Endothelial cell of umbilical vein (primary cell): ENCODE measurements at regions of chr5 and their contacts with region 1.

Region 1: DNA sequence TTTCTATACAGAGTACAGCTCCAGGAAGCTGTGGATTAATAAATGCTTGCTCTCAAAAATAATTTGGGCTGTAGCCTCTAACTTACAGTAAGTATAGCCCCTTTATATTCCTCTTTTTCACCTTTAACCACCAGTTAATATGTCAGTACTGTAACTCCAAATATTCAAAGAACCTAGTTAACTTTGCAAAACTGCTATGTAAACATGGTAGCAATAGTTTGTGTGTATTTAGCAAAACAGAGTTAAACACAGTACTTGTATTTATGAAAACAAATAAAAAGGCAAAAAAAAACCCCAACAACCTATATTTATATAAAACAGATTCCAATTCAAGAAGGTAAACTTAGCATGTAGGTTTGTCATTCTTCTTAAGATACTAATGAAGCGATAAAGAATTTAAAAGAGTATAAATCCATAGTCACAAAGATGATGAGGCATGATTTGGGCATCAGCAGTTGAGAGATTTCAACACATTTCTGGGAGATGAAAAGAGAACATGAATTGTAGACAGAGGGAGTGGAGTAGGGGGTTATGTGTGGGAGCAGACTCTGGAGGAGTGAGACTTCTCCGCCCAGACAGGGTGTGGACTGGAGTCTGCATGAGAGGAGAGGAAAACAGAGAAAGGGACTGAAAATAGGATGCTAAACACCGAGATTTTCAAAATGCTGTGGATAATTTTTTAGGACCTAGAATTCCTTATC is 47.0 kb upstream of the F2RL1 start:
- DNase-seq: no peak
- H3K4me3 ChIP-seq: no peak overlapping the region
- H3K27ac ChIP-seq: no peak overlapping the region
- H3K4me1 ChIP-seq: peaks cover 6% of the 10 kb centered on the region
- H3K27me3 ChIP-seq: no peaks in the 10 kb centered on the region
- CTCF ChIP-seq: no peak
- POLR2A ChIP-seq: no peak

Region 2: GRCh38 chr5:75828029-75828428 is 943.8 kb before region 1 on chr5:
- CTCF ChIA-PET with region 1: no interaction called
- POLR2A ChIA-PET with region 1: no interaction called
- dilution Hi-C with region 1: no loop called
- intact Hi-C with region 1: no loop called
- DNase-seq: no peak
- H3K4me3 ChIP-seq: no peak overlapping the region
- H3K27ac ChIP-seq: no peak overlapping the region
- H3K4me1 ChIP-seq: no peaks in the 10 kb centered on the region
- H3K27me3 ChIP-seq: no peaks in the 10 kb centered on the region
- CTCF ChIP-seq: no peak
- POLR2A ChIP-seq: no peak

Region 3: GRCh38 chr5:76402886-76403765 is 368.7 kb before region 1 on chr5 and contains the start of gene IQGAP2:
- CTCF ChIA-PET with region 1: interaction called, 7 read pairs
- POLR2A ChIA-PET with region 1: no interaction called
- dilution Hi-C with region 1: no loop called
- intact Hi-C with region 1: loop called (anchors 1 kb)
- DNase-seq: peak; percentile 51
- H3K4me3 ChIP-seq: peak within 1 kb of the TSS; percentile 42 to 70 (median 50)
- H3K27ac ChIP-seq: no peak within 1 kb of the TSS
- H3K4me1 ChIP-seq: peaks cover 7% of the 10 kb centered on the region
- H3K27me3 ChIP-seq: peaks cover 34 to 54% of the 10 kb centered on the region in 2 experiments
- CTCF ChIP-seq: peak; percentile 66 to 82
- POLR2A ChIP-seq: no peak
- total RNA-seq, gene IQGAP2: 4.7 and 5.7 TPM in 2 replicates

Region 4: DNA sequence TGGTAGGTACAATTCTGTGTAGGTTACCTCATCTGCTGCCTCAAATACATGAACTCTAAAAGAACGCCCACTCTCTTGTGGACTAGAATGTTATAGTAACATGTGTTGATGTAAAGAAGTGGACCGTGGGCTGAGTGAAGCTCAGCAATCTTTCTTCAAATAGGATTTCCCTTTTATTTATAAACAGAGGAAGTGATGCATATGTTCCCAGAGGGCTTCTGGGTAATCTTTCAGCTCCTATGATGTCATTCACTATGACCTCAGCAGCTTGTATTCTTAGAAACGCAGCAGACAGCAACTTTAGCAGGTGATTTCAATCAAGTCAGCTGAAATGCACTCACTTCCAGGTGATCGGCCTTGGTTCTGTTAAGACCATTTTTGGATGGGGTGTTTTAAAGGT is 163.0 kb before region 1 on chr5:
- CTCF ChIA-PET with region 1: interaction called, 391 read pairs
- POLR2A ChIA-PET with region 1: interaction called, 11 read pairs
- dilution Hi-C with region 1: no loop called
- intact Hi-C with region 1: no loop called
- DNase-seq: peak; percentile 64
- H3K4me3 ChIP-seq: no peak overlapping the region
- H3K27ac ChIP-seq: no peak overlapping the region
- H3K4me1 ChIP-seq: no peaks in the 10 kb centered on the region
- H3K27me3 ChIP-seq: no peaks in the 10 kb centered on the region
- CTCF ChIP-seq: no peak
- POLR2A ChIP-seq: no peak

Region 5: DNA sequence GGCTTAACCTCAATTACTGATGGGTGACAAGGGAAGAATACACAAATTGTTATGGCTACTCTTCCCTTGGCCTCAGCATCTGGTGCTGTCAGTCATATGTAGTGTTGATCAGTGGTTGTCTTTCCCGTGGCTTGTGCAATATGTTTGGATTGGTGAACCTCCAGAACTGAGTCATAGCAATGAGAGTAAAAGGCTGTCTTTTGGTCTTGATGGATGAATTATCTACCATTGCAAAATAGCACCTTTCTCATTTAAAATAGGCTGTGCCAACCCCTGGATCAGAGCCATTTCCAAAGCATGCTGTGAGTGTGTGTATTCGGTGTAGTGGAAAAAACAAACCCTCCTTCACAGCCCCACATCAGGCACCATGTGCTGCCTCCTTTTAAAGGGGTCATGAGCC is 70.6 kb before region 1 on chr5:
- CTCF ChIA-PET with region 1: interaction called, 19 read pairs
- POLR2A ChIA-PET with region 1: no interaction called
- dilution Hi-C with region 1: no loop called
- intact Hi-C with region 1: no loop called
- DNase-seq: peak; percentile 45
- H3K4me3 ChIP-seq: no peak overlapping the region
- H3K27ac ChIP-seq: no peak overlapping the region
- H3K4me1 ChIP-seq: peaks cover 53% of the 10 kb centered on the region
- H3K27me3 ChIP-seq: no peaks in the 10 kb centered on the region
- CTCF ChIP-seq: no peak
- POLR2A ChIP-seq: no peak

Region 6: GRCh38 chr5:76785487-76785886 is 13.6 kb after region 1 on chr5:
- CTCF ChIA-PET with region 1: interaction called, 35 read pairs
- POLR2A ChIA-PET with region 1: no interaction called
- dilution Hi-C with region 1: no loop called
- intact Hi-C with region 1: no loop called
- DNase-seq: peak; percentile 78
- H3K4me3 ChIP-seq: no peak overlapping the region
- H3K27ac ChIP-seq: peak overlapping the region; percentile 31
- H3K4me1 ChIP-seq: peaks cover 62% of the 10 kb centered on the region
- H3K27me3 ChIP-seq: no peaks in the 10 kb centered on the region
- CTCF ChIP-seq: no peak
- POLR2A ChIP-seq: no peak

Region 7: DNA sequence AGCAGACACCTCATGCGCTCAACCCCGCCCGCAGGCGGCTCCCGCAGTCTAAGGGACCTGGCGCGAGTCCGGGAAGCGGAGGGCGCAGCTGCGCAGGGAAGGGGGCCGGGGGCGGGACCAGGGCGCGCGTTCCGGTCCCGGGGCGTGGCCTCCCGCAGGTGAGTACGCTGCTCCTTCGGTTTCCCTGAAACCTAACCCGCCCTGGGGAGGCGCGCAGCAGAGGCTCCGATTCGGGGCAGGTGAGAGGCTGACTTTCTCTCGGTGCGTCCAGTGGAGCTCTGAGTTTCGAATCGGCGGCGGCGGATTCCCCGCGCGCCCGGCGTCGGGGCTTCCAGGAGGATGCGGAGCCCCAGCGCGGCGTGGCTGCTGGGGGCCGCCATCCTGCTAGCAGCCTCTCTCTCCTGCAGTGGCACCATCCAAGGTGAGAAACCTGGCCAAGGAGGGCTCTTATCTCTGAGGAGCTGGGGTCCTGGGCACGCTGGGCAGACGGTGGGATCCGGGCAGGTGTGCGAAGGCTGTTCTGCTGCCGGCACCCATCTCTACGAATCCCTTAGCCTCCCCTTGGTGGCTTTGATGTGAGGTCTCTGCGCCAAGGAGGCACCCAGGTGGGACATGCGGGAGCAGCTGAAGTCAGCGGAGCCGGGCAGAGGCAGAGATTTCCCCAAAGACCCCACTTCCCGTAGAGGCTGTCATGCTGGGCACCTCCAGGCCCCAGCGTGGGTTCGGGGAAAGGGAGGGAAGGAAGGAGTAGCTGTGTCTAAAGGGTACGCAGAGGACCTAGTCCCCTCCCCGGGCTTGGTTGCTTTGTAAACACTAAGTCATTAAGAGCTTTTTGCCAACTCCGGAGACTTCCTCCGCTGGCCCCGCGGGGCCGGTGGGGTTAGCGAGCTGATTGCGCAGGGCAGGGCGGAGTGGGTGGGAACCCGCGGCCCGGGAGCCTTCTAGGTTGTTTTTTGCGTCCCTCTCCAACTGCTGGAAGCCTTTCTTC is 47.3 kb after region 1 on chr5 and contains the start of gene F2RL1:
- CTCF ChIA-PET with region 1: interaction called, 57 read pairs
- POLR2A ChIA-PET with region 1: no interaction called
- dilution Hi-C with region 1: no loop called
- intact Hi-C with region 1: loop called (anchors 2 kb)
- DNase-seq: peak; percentile 61
- H3K4me3 ChIP-seq: peak within 1 kb of the TSS; percentile 68 to 82 (median 80)
- H3K27ac ChIP-seq: peak within 1 kb of the TSS; percentile 75
- H3K4me1 ChIP-seq: peaks cover 21% of the 10 kb centered on the region
- H3K27me3 ChIP-seq: no peaks in the 10 kb centered on the region
- CTCF ChIP-seq: no peak
- POLR2A ChIP-seq: no peak
- total RNA-seq, gene F2RL1: 21.9 and 42.6 TPM in 2 replicates

Region 8: DNA sequence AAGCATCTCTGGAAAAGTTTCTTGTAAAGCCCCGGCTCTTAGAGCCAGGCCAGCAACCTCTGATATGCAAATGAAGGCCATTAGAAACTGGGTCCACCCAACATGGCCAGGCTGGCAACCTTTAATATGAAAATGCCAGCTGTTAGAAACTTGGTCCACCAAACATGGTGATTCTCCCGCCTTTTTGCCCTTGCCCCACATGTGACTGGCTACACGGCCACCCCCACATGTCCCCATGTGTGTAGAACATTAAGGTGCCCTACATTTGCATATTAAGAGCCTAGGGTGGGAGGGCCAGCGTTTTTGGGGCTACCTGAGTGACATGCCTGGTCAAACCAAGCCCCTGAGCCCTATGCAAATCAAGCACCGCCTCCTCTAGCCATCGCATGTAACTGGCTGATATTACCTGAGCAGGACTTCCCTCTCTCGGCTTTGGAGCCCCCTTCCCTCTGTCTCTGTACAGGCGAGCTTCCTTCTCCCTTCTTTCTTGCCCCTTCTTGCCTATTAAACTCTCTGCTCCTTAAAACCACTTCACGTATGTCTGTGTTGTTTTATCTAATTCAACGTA is 117.0 kb after region 1 on chr5:
- CTCF ChIA-PET with region 1: no interaction called
- POLR2A ChIA-PET with region 1: no interaction called
- dilution Hi-C with region 1: no loop called
- intact Hi-C with region 1: no loop called
- DNase-seq: no peak
- H3K4me3 ChIP-seq: no peak overlapping the region
- H3K27ac ChIP-seq: no peak overlapping the region
- H3K4me1 ChIP-seq: no peaks in the 10 kb centered on the region
- H3K27me3 ChIP-seq: peaks cover 4 to 9% of the 10 kb centered on the region in 2 experiments
- CTCF ChIP-seq: no peak
- POLR2A ChIP-seq: no peak

Region 9: DNA sequence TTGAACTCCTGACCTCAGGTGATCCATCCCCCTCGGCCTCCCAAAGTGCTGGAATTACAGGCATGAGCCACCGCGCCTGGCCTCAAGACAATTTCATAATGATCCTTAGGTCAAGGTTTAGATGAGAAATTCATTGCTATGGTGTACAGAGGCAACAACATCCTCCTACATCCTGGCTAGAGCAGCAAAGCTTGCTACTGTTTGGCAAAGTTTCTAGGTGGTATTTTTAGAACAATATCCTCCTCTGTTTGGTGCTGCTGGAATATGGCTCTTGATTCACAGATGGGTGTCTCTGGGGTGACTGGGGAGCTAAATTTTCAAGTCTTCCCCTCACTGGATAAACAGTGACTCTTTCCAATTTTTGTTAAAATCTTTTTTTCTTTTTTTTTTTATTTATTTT is 211.6 kb after region 1 on chr5:
- CTCF ChIA-PET with region 1: no interaction called
- POLR2A ChIA-PET with region 1: no interaction called
- dilution Hi-C with region 1: no loop called
- intact Hi-C with region 1: no loop called
- DNase-seq: no peak
- H3K4me3 ChIP-seq: no peak overlapping the region
- H3K27ac ChIP-seq: no peak overlapping the region
- H3K4me1 ChIP-seq: no peaks in the 10 kb centered on the region
- H3K27me3 ChIP-seq: no peaks in the 10 kb centered on the region
- CTCF ChIP-seq: no peak
- POLR2A ChIP-seq: no peak